ENCODE measurements at regions of chr10 and their contacts with region 1.

Region 1: GRCh38 chr10:92240289-92241157 is 50.4 kb downstream of the CPEB3 start:
- DNase-seq: no peak
- ATAC-seq: peak; percentile 76

Region 2: DNA sequence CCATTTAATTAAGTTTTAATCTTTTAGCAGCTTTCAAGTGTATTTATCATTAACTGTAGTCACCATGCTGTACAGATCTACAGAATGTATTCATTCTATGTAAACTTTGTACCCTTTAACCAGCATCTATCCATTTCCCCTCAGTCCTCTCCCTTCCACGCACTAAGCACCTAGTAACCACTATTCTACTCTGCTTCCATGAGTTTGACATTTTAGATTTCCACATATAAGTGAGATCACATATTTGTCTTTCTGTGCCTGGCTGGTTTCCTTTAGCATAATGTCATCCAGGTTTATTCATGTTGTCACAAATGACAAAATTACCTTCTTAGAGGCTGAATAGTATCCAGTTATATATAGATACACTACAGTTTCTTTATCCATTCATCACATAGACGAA is 237.3 kb before region 1 on chr10:
- intact Hi-C with region 1: no loop called
- DNase-seq: no peak
- ATAC-seq: no peak

Region 3: DNA sequence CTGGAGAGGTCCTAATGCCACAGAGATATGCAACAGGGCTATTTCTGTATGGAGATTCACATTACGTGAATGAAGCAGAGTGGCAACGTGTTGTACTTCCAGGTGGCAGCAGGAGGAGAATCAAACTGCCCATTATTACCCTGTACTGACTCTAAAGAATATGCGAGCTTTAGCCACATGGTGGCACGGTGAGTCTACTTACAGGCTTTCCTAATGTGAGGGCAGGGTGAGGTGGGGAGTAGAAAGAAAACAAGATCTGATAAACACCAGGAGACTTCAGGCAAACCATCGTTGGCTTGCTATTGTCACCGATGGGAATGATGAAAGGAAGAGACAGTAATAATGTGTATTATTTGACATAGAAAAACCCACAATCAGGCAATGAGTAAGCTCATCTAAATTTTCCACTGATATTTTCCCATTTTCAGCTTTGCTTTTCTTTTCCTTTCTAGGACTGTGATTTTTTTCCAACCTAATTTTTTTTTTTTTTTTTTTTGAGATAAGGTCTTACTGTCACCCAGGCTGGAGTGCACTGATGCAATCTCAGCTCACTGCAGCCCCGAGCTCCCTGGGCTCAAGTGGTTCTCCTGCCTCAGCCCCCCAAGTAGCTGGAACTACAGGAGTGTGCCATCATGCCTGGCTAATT is 152.7 kb before region 1 on chr10:
- intact Hi-C with region 1: loop called (anchors 2 kb)
- DNase-seq: no peak
- ATAC-seq: peak; percentile 93

Region 4: GRCh38 chr10:92284112-92284704 is 43.7 kb after region 1 on chr10:
- intact Hi-C with region 1: no loop called
- DNase-seq: no peak
- ATAC-seq: peak; percentile 48

Region 5: DNA sequence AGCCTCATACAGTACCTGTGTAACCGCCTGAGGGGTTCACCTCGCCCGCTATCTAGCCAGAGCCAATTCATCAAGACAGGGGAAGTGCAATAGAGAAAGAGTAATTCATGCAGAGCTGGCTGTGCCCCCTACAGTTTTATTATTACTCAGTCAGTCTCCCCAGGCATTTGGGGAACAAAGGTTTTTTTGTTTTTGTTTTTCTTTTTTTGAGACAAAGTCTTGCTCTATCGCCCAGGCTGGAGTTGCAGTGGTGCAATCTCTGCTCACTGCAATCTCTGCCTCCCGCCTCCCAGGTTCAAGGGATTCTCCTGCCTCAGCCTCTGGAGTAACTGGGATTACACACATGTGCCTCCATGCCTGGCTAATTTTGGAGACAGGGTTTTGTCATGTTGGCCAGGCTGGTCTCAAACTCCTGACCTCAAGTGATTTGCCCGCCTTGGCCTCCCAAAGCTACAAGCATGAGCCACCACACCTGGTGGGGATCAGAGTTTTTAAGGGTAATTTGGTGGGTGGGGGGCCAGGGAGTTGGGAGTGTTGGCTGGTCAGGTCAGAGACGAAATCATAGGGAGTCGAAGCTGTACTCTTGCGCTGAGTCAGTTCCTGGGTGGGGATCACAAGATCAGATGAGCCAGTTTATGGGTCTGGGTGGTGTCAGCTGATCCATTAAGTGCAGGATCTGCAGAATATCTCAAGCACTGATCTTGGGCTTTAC is 166.9 kb after region 1 on chr10:
- intact Hi-C with region 1: no loop called
- DNase-seq: no peak
- ATAC-seq: no peak